Adrenal gland (tissue), 19 donors: ENCODE measurements at regions of chr17 and their contacts with region 1.

Region 1: DNA sequence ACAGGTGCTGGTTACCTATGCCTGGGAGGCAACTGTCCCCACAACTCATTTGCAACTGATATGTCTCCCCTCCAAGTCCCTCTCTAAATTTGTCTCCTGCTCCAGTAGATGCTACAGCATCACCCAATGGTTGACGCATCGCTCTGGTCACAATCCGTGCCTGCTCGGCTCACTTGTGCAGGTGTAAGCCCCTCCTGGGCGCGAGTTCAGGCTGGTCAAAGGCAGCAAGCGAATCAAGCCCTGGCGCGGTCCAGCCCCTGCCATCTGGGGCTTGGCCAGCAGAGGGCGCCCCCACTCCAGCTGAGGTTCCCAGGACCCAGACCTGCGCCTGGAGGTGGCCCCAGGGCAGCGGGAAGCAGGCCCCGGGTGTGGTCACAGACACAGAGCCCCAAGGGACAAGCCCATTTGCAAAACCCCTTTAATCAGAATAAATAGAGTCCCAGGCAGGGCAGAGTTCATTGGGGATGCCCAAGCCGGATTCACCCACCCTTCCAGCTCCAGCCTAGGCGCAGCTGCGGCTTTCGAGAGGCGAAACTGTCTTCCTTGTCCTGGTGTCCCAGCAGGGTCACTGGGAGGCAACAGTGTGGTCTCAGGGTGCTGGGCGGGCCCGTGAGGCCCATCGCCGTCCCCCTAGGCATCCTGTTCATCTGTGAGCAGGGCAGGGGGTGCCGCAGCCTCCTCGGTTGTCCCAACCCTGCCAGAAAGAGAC is 15.9 kb downstream of the TMC6 start:
- DNase-seq: peak; percentile 61 to 88 (median 76)
- H3K4me3 ChIP-seq: no peak overlapping the region
- H3K27ac ChIP-seq: no peak overlapping the region
- H3K4me1 ChIP-seq: no peaks in the 10 kb centered on the region
- H3K27me3 ChIP-seq: peaks cover 6% of the 10 kb centered on the region
- CTCF ChIP-seq: peak; percentile 96 to 100 (median 98)
- POLR2A ChIP-seq: no peak

Region 2: DNA sequence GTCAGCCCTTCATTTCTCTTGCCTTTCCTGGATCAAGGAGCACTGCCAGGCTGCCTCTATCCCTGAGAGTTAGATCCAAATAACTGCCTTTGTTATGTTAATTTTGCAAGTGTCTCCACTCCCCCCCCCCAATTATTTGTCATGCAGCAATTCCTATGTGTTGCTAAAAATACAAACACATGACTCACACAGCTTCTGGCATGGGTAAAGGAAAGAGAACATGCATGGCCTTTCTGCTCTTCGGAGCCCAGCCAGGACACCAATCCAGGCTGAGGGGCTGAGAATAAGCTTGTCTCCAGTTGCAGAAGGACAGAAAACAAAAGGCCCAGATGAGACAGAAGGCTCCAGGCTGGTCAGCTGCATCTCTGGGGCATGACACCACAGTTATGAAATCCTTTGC is 302.1 kb before region 1 on chr17:
- intact Hi-C with region 1: no loop called
- DNase-seq: peak; percentile 43 to 77 (median 66)
- H3K4me3 ChIP-seq: no peak overlapping the region
- H3K27ac ChIP-seq: peak overlapping the region in 1 of 5 donors; percentile 37
- H3K4me1 ChIP-seq: peaks cover 0 to 12% of the 10 kb centered on the region in 2 donors
- H3K27me3 ChIP-seq: no peaks in the 10 kb centered on the region
- CTCF ChIP-seq: no peak
- POLR2A ChIP-seq: no peak

Region 3: GRCh38 chr17:78176548-78177025 is 63.9 kb after region 1 on chr17:
- intact Hi-C with region 1: loop called (anchors 2 to 5 kb)
- DNase-seq: peak; percentile 63 to 86 (median 76)
- H3K4me3 ChIP-seq: no peak overlapping the region
- H3K27ac ChIP-seq: no peak overlapping the region
- H3K4me1 ChIP-seq: peaks cover 19 to 61% of the 10 kb centered on the region in 2 donors
- H3K27me3 ChIP-seq: no peaks in the 10 kb centered on the region
- CTCF ChIP-seq: peak; percentile 75 to 91 (median 81)
- POLR2A ChIP-seq: no peak

Region 4: GRCh38 chr17:78250891-78251794 is 138.5 kb after region 1 on chr17:
- intact Hi-C with region 1: loop called in 1 of 2 experiments (anchors 5 kb)
- DNase-seq: peak; percentile 86 to 90 (median 87)
- H3K4me3 ChIP-seq: peak overlapping the region in 1 of 4 donors; percentile 1
- H3K27ac ChIP-seq: peak overlapping the region in 2 of 5 donors; percentile 29 to 64
- H3K4me1 ChIP-seq: peaks cover 0 to 16% of the 10 kb centered on the region in 2 donors
- H3K27me3 ChIP-seq: no peaks in the 10 kb centered on the region
- CTCF ChIP-seq: peak; percentile 95 to 100 (median 98)
- POLR2A ChIP-seq: no peak